Activated CD4-positive, alpha-beta T cell treated with anti-CD3 and anti-CD28 coated beads for 36 hours (primary cell): ENCODE measurements at regions of chr12 and their contacts with region 1.

Region 1: DNA sequence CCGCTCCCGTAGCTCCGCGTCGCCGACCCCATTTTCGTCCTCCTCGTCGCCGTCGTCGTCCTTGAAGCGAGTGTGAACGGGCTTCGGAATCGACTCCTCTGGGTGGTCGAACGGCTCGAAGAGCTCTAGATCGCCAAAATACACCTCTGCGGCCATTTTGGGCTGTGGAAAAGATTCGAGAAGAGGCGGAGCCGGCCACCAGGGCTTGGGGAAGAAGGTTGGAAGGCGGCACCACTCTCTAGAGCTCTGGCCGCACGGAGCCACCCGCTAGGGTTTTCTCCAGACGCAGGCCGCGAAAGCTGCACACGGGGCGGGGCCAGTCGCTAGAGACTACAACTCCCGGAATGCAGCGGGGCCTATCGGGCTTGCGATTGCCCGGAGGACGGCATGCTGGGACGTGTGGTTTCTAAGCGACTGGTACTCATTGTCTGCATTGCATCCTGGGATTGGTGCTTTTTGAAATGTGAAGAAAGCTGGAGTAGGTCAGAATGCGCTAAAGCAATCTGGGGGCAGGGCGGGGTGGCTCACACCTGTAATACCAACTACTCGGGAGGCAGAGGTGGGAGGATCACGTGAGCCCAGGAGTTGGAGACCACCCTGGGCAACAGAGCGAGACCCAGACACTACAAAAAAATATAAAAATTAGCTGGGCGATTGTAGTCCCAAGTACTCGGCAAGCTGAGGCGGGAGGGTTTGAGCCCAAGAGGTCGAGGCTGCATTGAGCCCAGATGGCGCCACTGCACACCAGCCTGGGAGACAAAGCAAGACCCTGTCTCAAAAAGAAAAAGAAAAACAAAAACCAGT is at the start of gene ZCCHC8:
- DNase-seq: peak; percentile 99
- ATAC-seq: peak; percentile 95
- H3K4me3 Mint-ChIP-seq: peak within 1 kb of the TSS; percentile 97
- H3K27ac Mint-ChIP-seq: peak within 1 kb of the TSS; percentile 98
- H3K4me1 Mint-ChIP-seq: peaks cover 32% of the 10 kb centered on the region
- H3K27me3 Mint-ChIP-seq: no peaks in the 10 kb centered on the region
- total RNA-seq, gene ZCCHC8: 34.7 to 39.1 TPM

Region 2: DNA sequence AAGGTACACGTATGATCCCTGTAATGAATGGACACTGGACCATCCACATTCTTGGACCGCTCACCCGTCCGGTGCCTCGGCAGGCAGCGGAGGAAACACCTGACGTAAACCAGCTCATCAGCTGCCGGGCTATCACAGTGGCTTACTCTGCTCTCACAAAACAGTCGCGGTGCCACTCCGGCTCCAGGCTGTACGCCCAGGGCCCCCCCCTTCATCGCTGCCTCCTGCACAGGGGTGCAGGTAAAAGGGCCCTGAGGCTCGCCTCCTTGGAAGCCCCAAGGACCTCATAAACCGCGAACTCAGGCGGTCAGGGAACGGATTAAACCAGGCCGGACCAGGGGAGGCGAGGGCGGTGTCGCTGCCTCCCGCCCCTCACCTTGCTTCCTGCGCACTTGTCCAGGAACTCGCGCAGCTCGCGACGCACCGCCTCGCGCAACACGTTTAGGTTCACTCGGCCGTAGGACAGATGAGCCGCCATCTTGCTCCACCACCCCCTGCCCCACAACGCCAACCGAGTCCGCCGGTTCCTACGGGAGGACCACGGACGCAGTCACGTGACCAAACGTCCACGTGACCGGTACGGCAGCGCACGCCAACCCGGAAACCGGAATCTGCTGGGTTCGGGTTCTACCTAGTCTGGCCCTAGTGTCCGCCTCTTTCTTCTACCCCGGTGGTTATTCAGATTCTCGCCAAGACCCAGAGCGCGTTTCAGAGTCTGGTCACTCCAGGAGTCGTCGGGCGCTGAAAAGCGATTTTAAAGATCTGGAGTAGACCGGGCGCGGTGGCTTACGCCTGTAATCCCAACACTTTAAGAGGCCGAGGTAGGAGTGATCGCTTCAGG is 234.7 kb before region 1 on chr12 and contains the start of gene VPS33A:
- CTCF ChIA-PET with region 1: no interaction called
- POLR2A ChIA-PET with region 1: interaction called, 12 read pairs
- intact Hi-C with region 1: loop called in 1 of 2 experiments (anchors 2 kb)
- DNase-seq: peak; percentile 98
- ATAC-seq: peak; percentile 86
- H3K4me3 Mint-ChIP-seq: peak within 1 kb of the TSS; percentile 97
- H3K27ac Mint-ChIP-seq: peak within 1 kb of the TSS; percentile 98
- H3K4me1 Mint-ChIP-seq: peaks cover 23% of the 10 kb centered on the region
- H3K27me3 Mint-ChIP-seq: no peaks in the 10 kb centered on the region
- total RNA-seq, gene VPS33A: 24.8 to 26.4 TPM

Region 3: GRCh38 chr12:122356192-122356635 is 144.7 kb before region 1 on chr12:
- CTCF ChIA-PET with region 1: no interaction called
- POLR2A ChIA-PET with region 1: no interaction called
- intact Hi-C with region 1: no loop called
- DNase-seq: peak; percentile 73
- ATAC-seq: peak; percentile 95
- H3K4me3 Mint-ChIP-seq: no peak overlapping the region
- H3K27ac Mint-ChIP-seq: no peak overlapping the region
- H3K4me1 Mint-ChIP-seq: peaks cover 13% of the 10 kb centered on the region
- H3K27me3 Mint-ChIP-seq: no peaks in the 10 kb centered on the region

Region 4: DNA sequence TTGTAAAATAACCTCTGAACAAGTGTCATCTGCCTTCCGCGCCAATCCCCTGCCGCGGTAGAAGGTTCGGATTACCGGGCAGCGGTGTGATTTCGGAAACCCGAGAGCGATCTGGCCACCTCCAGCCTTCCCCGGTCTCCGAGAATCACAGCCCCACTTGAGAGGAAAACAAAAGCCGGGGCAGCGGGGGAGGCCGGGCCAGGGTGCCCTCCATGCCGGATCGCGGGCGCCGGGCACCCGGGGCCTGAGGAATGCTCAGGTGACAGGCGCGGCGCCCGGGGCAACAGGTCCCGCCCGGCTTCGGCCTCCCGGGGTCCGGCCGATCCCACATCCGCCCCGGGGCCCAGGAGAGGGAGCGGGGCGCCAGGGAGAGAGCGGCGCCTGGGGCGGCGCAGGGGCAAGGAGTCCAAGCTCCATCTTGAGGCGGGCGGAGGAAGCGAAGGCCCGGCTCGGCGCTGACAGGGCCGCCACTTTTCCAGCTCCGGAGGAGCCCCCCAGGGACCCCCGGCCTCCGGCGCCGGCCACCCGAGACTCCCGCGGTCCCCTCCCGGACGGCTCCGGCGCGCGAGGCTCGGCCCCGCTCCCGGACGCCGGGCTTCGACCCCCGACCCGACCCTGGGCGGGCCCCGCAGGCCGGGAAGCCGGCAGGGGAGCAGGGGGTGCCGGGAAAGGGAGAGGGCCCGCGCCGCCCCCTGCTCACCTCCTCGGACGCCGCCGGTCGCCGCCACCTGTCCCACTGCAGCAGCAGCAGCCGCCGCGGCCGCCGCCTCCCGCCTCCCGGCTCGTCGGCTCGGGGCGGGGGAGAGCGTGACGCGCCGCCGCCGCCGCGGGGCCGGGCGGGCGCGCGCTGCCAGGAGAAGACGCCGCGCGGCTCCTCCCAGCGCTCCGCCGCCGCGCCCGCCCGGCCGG is 78.8 kb before region 1 on chr12 and contains the start of gene CLIP1:
- CTCF ChIA-PET with region 1: no interaction called
- POLR2A ChIA-PET with region 1: interaction called, 5 read pairs
- intact Hi-C with region 1: loop called in 1 of 2 experiments (anchors 1 kb)
- DNase-seq: peak; percentile 77
- ATAC-seq: peak; percentile 74
- H3K4me3 Mint-ChIP-seq: peak within 1 kb of the TSS; percentile 91
- H3K27ac Mint-ChIP-seq: peak within 1 kb of the TSS; percentile 89
- H3K4me1 Mint-ChIP-seq: peaks cover 37% of the 10 kb centered on the region
- H3K27me3 Mint-ChIP-seq: no peaks in the 10 kb centered on the region
- total RNA-seq, gene CLIP1: 53.9 to 58.6 TPM

Region 5: GRCh38 chr12:122517877-122518276 is 17.0 kb after region 1 on chr12:
- CTCF ChIA-PET with region 1: interaction called, 12 read pairs
- POLR2A ChIA-PET with region 1: interaction called, 12 read pairs
- intact Hi-C with region 1: loop called in 1 of 2 experiments (anchors 1 kb)
- DNase-seq: no peak
- ATAC-seq: peak; percentile 52
- H3K4me3 Mint-ChIP-seq: no peak overlapping the region
- H3K27ac Mint-ChIP-seq: peak overlapping the region; percentile 78
- H3K4me1 Mint-ChIP-seq: peaks cover 54% of the 10 kb centered on the region
- H3K27me3 Mint-ChIP-seq: no peaks in the 10 kb centered on the region

Region 6: GRCh38 chr12:122974274-122974891 is 473.5 kb after region 1 on chr12:
- CTCF ChIA-PET with region 1: no interaction called
- POLR2A ChIA-PET with region 1: no interaction called
- intact Hi-C with region 1: loop called in 1 of 2 experiments (anchors 1 kb)
- DNase-seq: peak; percentile 99
- ATAC-seq: peak; percentile 86
- H3K4me3 Mint-ChIP-seq: peak overlapping the region; percentile 95
- H3K27ac Mint-ChIP-seq: peak overlapping the region; percentile 100
- H3K4me1 Mint-ChIP-seq: peaks cover 21% of the 10 kb centered on the region
- H3K27me3 Mint-ChIP-seq: no peaks in the 10 kb centered on the region